GM18951 (cell line): ENCODE measurements at regions of chr1 and their contacts with region 1.

Region 1: GRCh38 chr1:202571347-202572339 is 138.6 kb downstream of the SYT2 start:
- POLR2A ChIP-seq: no peak

Region 2: GRCh38 chr1:202438432-202439174 is 133.0 kb before region 1 on chr1:
- in situ Hi-C with region 1: no loop called
- POLR2A ChIP-seq: no peak

Region 3: DNA sequence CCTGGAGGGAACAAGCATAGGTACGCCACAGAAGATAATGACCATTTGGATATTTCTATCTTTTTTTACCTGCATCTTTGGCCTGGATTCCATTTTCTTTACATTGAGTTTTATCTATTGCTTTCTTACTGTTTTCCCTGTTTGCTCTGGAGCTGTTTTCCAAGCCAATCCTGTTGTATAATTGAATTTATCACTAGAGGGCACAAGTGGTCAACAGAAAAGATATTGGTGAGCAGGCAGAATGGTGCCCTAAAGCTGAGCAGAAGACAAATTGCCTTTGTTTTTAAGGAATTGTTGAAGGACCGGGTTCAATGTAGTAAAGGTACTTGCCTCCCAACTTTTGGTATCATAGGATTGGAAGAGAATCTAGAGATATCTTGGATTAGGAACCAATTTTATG is 70.4 kb before region 1 on chr1:
- in situ Hi-C with region 1: loop called (anchors 5 kb)
- POLR2A ChIP-seq: no peak

Region 4: DNA sequence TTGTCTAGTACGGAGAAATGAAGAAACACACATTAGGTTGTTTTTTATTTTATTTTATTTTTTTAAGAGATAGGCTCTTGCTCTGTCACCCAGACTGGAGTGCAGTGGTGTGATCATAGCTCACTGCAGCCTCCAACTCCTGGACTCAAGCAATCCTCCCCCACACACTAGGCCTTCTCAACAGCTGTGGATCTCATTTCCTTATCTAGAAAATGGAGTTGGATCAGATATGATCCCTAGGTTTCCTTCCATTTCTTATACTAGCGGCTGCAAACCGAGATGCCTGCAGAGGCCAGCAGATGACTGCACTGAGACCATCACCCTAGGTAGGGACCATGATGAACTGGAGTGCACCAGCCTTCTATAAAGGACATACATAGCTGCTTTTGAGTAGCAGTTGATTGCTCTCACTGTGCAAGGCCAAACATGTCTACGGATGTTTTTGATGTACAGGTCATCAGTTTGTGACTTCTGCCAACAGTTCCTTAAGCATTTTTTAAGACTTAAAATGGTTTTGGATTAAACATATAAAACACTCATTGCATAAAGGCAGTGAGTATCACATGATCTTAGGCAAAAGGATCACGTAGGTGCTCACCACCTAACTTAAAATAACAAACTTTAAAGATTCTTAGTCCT is 366.8 kb after region 1 on chr1:
- in situ Hi-C with region 1: no loop called
- POLR2A ChIP-seq: no peak